CD8-positive, alpha-beta T cell (primary cell): ENCODE measurements at regions of chr1 and their contacts with region 1.

Region 1: GRCh38 chr1:31822766-31823165 is 6.9 kb upstream of the SPOCD1 start:
- DNase-seq: no peak
- ATAC-seq: no peak
- H3K4me3 ChIP-seq: no peak overlapping the region
- H3K4me3 Mint-ChIP-seq: no peak overlapping the region
- H3K27ac ChIP-seq: no peak overlapping the region
- H3K27ac Mint-ChIP-seq: no peak overlapping the region
- H3K4me1 ChIP-seq: peaks cover 21% of the 10 kb centered on the region
- H3K4me1 Mint-ChIP-seq: peaks cover 17% of the 10 kb centered on the region
- H3K27me3 ChIP-seq: no peaks in the 10 kb centered on the region
- H3K27me3 Mint-ChIP-seq: no peaks in the 10 kb centered on the region
- CTCF ChIP-seq: no peak

Region 2: DNA sequence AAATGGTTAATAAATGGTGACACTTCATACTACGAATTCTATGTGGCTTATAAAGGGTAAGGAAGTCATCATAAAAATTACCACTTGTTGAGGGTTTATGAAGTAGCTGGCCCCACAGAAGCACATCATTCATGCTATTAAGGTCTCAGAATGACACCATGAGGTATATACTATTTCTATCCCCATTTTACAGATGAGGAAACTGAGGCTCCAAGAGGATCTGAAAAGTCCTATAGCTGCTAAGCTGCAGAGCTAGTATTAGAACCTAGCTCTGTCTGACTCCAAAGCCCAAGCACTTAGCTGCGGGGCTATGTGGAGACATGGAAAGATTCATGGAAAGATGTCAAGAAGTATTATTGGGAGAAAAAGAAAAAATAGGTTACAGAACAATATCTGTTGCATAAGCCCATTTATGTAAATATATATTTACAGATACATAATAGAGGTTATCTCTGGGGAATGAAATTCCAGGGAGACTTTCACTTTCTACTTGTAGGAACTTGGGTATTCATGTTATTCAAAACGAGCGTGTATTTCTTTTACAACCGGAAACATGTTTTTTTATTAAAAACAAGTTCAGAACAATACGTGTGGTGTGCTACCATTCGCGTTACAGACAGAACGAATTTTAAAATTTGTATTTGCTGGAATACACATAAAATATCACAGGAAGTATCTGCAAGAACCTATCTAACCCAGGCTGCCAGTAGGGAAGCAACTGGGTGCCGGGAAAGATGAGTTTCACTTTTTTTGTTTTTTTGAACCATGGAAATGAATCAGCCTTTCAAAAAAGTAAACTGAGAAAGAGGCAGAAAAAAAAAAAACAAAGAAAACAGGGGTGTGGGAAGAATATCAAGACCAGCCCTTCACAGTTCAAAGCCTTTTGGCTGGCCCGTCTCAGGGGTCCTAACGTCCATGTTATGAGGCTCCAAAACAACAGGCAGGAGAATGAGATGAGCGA is 20.3 kb before region 1 on chr1:
- CTCF ChIA-PET with region 1: no interaction called
- POLR2A ChIA-PET with region 1: no interaction called
- intact Hi-C with region 1: no loop called
- DNase-seq: no peak
- ATAC-seq: no peak
- H3K4me3 ChIP-seq: no peak overlapping the region
- H3K4me3 Mint-ChIP-seq: peak overlapping the region; percentile 69
- H3K27ac ChIP-seq: no peak overlapping the region
- H3K27ac Mint-ChIP-seq: peak overlapping the region; percentile 55
- H3K4me1 ChIP-seq: no peaks in the 10 kb centered on the region
- H3K4me1 Mint-ChIP-seq: peaks cover 12% of the 10 kb centered on the region
- H3K27me3 ChIP-seq: no peaks in the 10 kb centered on the region
- H3K27me3 Mint-ChIP-seq: no peaks in the 10 kb centered on the region
- CTCF ChIP-seq: no peak

Region 3: GRCh38 chr1:31880890-31881687 is 58.3 kb after region 1 on chr1:
- CTCF ChIA-PET with region 1: interaction called, 4 read pairs
- POLR2A ChIA-PET with region 1: no interaction called
- intact Hi-C with region 1: loop called in 1 of 2 experiments (anchors 10 kb)
- DNase-seq: no peak
- ATAC-seq: no peak
- H3K4me3 ChIP-seq: no peak overlapping the region
- H3K4me3 Mint-ChIP-seq: no peak overlapping the region
- H3K27ac ChIP-seq: no peak overlapping the region
- H3K27ac Mint-ChIP-seq: no peak overlapping the region
- H3K4me1 ChIP-seq: peaks cover 17% of the 10 kb centered on the region
- H3K4me1 Mint-ChIP-seq: peaks cover 24% of the 10 kb centered on the region
- H3K27me3 ChIP-seq: no peaks in the 10 kb centered on the region
- H3K27me3 Mint-ChIP-seq: no peaks in the 10 kb centered on the region
- CTCF ChIP-seq: no peak